Activated CD4-positive, alpha-beta memory T cell treated with anti-CD3 and anti-CD28 coated beads, Interleukin-2, amount 10 ng/mL, durations not matched to agents 7 days and 5 days (primary cell): ENCODE measurements at regions of chr5 and their contacts with region 1.

Region 1: DNA sequence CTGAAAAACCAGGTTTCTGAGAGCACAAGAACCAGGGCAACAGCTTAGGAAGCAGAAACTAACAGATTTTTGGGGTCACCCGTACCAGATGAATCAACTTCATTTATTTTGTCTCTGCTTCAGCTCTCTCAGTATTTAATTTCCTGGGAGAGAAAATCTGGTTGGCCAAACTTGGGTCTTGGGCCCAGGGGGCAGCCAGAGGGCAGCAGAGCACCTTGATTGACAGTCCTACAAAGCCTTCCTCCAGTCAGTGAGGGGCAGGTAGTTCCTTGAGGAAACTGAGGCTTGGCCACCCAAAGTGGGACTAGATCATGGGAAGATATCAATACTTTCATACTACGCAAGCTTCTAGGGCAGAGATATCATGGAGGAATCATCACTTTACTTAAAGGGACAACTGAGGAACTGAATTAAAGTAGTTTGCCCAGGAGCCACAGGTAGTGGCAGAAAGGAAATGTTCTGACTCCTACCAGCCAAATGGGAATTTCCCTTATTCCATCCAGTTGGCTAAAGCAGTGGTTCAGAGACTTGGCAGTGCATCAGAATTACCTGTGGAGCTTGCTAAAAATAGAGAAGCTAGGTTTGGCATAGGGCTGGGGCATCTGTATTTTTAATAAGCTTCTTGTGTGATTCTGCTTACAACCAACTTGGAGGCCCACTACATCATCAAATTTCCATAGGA is 21.5 kb upstream of the ARHGAP26 start:
- DNase-seq: peak; percentile 59
- H3K4me3 Mint-ChIP-seq: no peak overlapping the region
- H3K27ac Mint-ChIP-seq: no peak overlapping the region
- H3K4me1 Mint-ChIP-seq: peaks cover 14% of the 10 kb centered on the region
- H3K27me3 Mint-ChIP-seq: peaks cover 4% of the 10 kb centered on the region

Region 2: GRCh38 chr5:142874537-142874936 is 125.8 kb after region 1 on chr5:
- CTCF ChIA-PET with region 1: interaction called, 96 read pairs
- POLR2A ChIA-PET with region 1: no interaction called
- DNase-seq: no peak
- H3K4me3 Mint-ChIP-seq: no peak overlapping the region
- H3K27ac Mint-ChIP-seq: no peak overlapping the region
- H3K4me1 Mint-ChIP-seq: no peaks in the 10 kb centered on the region
- H3K27me3 Mint-ChIP-seq: no peaks in the 10 kb centered on the region

Region 3: DNA sequence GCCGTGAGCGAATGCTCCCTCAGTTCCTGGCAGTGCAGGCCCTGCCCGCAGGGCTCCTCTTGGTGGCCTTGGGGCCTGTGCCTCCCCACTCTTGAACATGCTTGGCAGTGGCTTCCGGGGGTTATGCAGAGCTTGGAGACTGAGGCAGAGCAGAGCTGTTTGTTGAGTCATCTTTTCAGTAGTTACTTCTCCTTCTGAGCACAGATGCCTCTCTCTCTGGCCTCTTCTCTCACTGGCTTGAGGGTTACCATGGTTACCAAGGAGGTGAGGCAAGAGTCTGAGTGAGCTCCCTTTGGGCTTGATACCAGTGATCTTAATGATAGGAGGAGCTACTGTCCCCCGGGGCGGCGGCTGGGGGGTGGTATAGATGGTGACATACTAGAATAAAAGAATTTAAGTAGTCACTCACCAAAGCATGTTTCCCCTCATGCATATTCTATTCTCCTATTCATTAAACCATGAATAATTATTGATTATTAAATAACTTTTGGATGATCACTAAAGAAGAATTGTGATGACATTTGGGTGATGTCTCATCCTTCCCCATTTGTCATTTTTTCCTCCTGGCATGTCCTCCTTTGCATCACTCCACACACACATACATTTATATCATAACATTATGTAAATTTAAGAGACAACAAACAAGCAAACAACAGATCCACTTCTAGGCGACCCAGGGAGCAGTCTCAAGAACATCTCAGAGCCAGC is 132.5 kb after region 1 on chr5:
- CTCF ChIA-PET with region 1: interaction called, 96 read pairs
- POLR2A ChIA-PET with region 1: no interaction called
- DNase-seq: no peak
- H3K4me3 Mint-ChIP-seq: no peak overlapping the region
- H3K27ac Mint-ChIP-seq: no peak overlapping the region
- H3K4me1 Mint-ChIP-seq: peaks cover 23% of the 10 kb centered on the region
- H3K27me3 Mint-ChIP-seq: no peaks in the 10 kb centered on the region

Region 4: GRCh38 chr5:142888469-142889085 is 139.9 kb after region 1 on chr5:
- CTCF ChIA-PET with region 1: interaction called, 96 read pairs
- POLR2A ChIA-PET with region 1: no interaction called
- DNase-seq: no peak
- H3K4me3 Mint-ChIP-seq: no peak overlapping the region
- H3K27ac Mint-ChIP-seq: no peak overlapping the region
- H3K4me1 Mint-ChIP-seq: peaks cover 12% of the 10 kb centered on the region
- H3K27me3 Mint-ChIP-seq: no peaks in the 10 kb centered on the region